ENCODE measurements at regions of chr6 and their contacts with region 1.

Region 1: GRCh38 chr6:167742719-167743303 is 83.9 kb upstream of the AFDN start:
- DNase-seq: peak in 1 of 3 donors; percentile 4
- ATAC-seq: peak in 1 of 4 donors; percentile 63
- H3K4me3 ChIP-seq: no peak overlapping the region
- H3K27ac ChIP-seq: no peak overlapping the region
- H3K4me1 ChIP-seq: no peaks in the 10 kb centered on the region
- H3K27me3 ChIP-seq: no peaks in the 10 kb centered on the region
- CTCF ChIP-seq: no peak
- POLR2A ChIP-seq: no peak

Region 2: DNA sequence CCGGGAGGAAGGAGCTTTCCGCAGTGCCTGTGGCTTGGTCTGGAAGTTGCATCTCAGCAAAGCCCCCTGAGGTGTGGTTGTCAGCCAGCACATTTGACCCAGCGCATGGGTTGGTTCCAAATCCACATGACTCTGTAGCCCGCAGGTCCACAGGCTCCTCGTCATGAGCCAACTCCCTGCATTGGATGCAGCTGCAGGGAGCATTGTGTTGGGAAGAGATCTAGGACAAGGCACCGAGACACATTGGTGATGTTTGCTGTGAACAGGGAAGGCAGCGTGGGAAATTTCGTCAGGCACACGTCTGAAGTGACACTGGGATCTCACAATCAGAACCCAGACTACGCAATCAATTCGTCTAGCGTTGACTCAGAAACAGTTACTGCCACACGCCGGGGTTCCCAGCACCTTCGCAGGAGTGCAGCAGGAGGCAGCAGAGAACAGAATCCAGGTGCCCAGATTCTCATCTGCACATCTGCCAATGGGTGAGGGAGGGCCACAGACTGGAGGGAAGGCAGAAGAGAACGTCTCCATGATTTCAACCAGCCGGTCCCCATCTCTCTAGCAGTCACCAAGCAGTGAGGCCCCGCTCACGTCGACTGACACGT is 240.9 kb before region 1 on chr6:
- intact Hi-C with region 1: loop called in 1 of 2 experiments (anchors 10 kb)
- DNase-seq: peak; percentile 68 to 82 (median 78)
- ATAC-seq: peak; percentile 71 to 79 (median 73)
- H3K4me3 ChIP-seq: no peak overlapping the region
- H3K27ac ChIP-seq: peak overlapping the region in 2 of 3 donors; percentile 91 to 93
- H3K4me1 ChIP-seq: peaks cover 0 to 42% (median 19%) of the 10 kb centered on the region in 4 donors
- H3K27me3 ChIP-seq: no peaks in the 10 kb centered on the region
- CTCF ChIP-seq: peak; percentile 49 to 75 (median 69)
- POLR2A ChIP-seq: no peak